T-cell (primary cell): ENCODE measurements at regions of chr1 and their contacts with region 1.

Region 1: GRCh38 chr1:245779797-245780755 is 625.3 kb downstream of the KIF26B start:
- DNase-seq: no peak
- ATAC-seq: no peak
- H3K4me3 ChIP-seq: no peak overlapping the region
- H3K4me3 Mint-ChIP-seq: no peak overlapping the region
- H3K27ac ChIP-seq: no peak overlapping the region
- H3K27ac Mint-ChIP-seq: no peak overlapping the region
- H3K4me1 ChIP-seq: no peaks in the 10 kb centered on the region
- H3K4me1 Mint-ChIP-seq: peaks cover 0 to 3% (median 0%) of the 10 kb centered on the region in 3 donors
- H3K27me3 ChIP-seq: no peaks in the 10 kb centered on the region
- H3K27me3 Mint-ChIP-seq: no peaks in the 10 kb centered on the region

Region 2: DNA sequence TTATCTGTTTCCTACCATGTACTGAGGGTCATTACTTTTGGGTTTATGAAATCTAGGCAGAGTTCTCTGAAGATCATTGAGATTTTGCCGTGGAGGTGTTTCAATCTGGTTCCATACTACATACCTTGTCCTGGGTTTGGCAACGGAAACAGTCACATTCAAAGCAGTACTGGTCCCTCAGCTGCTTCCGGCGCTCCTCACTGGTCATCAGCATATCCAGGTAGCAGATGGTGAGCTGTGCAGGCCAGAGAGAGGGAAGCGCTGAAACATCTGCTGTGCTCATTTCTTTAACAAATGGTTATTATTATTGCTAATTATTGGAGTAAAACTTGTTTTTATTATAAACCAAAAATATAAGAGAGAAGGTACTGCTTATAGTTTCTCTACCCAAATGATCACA is 135.3 kb after region 1 on chr1:
- CTCF ChIA-PET with region 1: interaction called in 1 of 2 experiments, 13 read pairs
- POLR2A ChIA-PET with region 1: no interaction called
- DNase-seq: no peak
- ATAC-seq: no peak
- H3K4me3 ChIP-seq: no peak overlapping the region
- H3K4me3 Mint-ChIP-seq: no peak overlapping the region
- H3K27ac ChIP-seq: no peak overlapping the region
- H3K27ac Mint-ChIP-seq: no peak overlapping the region
- H3K4me1 ChIP-seq: no peaks in the 10 kb centered on the region
- H3K4me1 Mint-ChIP-seq: no peaks in the 10 kb centered on the region
- H3K27me3 ChIP-seq: no peaks in the 10 kb centered on the region
- H3K27me3 Mint-ChIP-seq: no peaks in the 10 kb centered on the region